ENCODE measurements at regions of chr17 and their contacts with region 1.

Region 1: GRCh38 chr17:14622615-14623101 is 321.8 kb downstream of the HS3ST3B1 start:
- DNase-seq: no peak
- ATAC-seq: no peak
- H3K4me3 ChIP-seq: no peak overlapping the region
- H3K27ac ChIP-seq: no peak overlapping the region
- H3K4me1 ChIP-seq: no peaks in the 10 kb centered on the region
- H3K27me3 ChIP-seq: no peaks in the 10 kb centered on the region
- CTCF ChIP-seq: no peak
- EP300 ChIP-seq: no peak
- POLR2A ChIP-seq: no peak
- RAD21 ChIP-seq: no peak

Region 2: GRCh38 chr17:14593656-14594330 is 28.9 kb before region 1 on chr17:
- CTCF ChIA-PET with region 1: no interaction called
- POLR2A ChIA-PET with region 1: no interaction called
- RAD21 ChIA-PET with region 1: no interaction called
- SMC1A ChIA-PET with region 1: no interaction called
- in situ Hi-C with region 1: no loop called
- intact Hi-C with region 1: loop called (anchors 1 kb)
- DNase-seq: no peak
- ATAC-seq: no peak
- H3K4me3 ChIP-seq: no peak overlapping the region
- H3K27ac ChIP-seq: no peak overlapping the region
- H3K4me1 ChIP-seq: no peaks in the 10 kb centered on the region
- H3K27me3 ChIP-seq: no peaks in the 10 kb centered on the region
- CTCF ChIP-seq: no peak
- EP300 ChIP-seq: no peak
- POLR2A ChIP-seq: no peak
- RAD21 ChIP-seq: no peak

Region 3: GRCh38 chr17:14688132-14688531 is 65.5 kb after region 1 on chr17:
- CTCF ChIA-PET with region 1: no interaction called
- POLR2A ChIA-PET with region 1: no interaction called
- RAD21 ChIA-PET with region 1: no interaction called
- SMC1A ChIA-PET with region 1: no interaction called
- in situ Hi-C with region 1: loop called (anchors 10 kb)
- intact Hi-C with region 1: no loop called
- DNase-seq: no peak
- ATAC-seq: no peak
- H3K4me3 ChIP-seq: no peak overlapping the region
- H3K27ac ChIP-seq: no peak overlapping the region
- H3K4me1 ChIP-seq: no peaks in the 10 kb centered on the region
- H3K27me3 ChIP-seq: no peaks in the 10 kb centered on the region
- CTCF ChIP-seq: no peak
- EP300 ChIP-seq: no peak
- POLR2A ChIP-seq: no peak
- RAD21 ChIP-seq: no peak

Region 4: DNA sequence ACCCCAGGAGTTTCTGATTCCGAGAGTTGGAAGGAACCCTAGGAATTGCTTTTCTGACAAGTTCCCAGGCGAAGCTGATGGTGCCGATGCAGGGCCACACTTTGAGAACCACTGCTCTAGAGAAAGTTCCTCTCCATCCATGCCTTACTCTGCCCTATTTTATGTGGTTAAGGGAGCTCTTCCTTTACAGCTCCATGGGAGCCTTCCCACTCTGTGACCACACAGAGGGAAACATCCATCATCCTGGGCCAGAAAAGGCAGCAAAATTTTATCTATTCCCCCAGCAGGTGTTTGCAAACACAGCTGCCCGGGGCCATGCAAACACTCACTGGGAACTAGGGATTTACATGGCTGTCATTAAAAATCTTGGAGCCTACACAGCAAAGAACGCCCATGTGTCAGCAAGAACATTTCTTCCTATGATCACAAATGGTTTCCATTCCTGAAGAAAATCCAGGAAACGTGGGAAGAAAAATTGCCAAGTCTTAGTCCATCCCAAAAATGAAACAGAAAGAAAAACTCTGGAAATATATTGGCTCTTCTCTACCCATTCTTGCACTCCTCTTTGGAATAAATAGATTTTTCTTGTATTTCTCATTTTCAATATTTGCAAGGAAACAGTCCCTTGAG is 389.8 kb after region 1 on chr17:
- CTCF ChIA-PET with region 1: no interaction called
- POLR2A ChIA-PET with region 1: no interaction called
- RAD21 ChIA-PET with region 1: no interaction called
- SMC1A ChIA-PET with region 1: no interaction called
- in situ Hi-C with region 1: no loop called
- intact Hi-C with region 1: no loop called
- DNase-seq: no peak
- ATAC-seq: no peak
- H3K4me3 ChIP-seq: no peak overlapping the region
- H3K27ac ChIP-seq: no peak overlapping the region
- H3K4me1 ChIP-seq: no peaks in the 10 kb centered on the region
- H3K27me3 ChIP-seq: no peaks in the 10 kb centered on the region
- CTCF ChIP-seq: no peak
- EP300 ChIP-seq: no peak
- POLR2A ChIP-seq: no peak
- RAD21 ChIP-seq: no peak

Measured in GM12878 (cell line).